ENCODE measurements at regions of chr10 and their contacts with region 1.

Region 1: DNA sequence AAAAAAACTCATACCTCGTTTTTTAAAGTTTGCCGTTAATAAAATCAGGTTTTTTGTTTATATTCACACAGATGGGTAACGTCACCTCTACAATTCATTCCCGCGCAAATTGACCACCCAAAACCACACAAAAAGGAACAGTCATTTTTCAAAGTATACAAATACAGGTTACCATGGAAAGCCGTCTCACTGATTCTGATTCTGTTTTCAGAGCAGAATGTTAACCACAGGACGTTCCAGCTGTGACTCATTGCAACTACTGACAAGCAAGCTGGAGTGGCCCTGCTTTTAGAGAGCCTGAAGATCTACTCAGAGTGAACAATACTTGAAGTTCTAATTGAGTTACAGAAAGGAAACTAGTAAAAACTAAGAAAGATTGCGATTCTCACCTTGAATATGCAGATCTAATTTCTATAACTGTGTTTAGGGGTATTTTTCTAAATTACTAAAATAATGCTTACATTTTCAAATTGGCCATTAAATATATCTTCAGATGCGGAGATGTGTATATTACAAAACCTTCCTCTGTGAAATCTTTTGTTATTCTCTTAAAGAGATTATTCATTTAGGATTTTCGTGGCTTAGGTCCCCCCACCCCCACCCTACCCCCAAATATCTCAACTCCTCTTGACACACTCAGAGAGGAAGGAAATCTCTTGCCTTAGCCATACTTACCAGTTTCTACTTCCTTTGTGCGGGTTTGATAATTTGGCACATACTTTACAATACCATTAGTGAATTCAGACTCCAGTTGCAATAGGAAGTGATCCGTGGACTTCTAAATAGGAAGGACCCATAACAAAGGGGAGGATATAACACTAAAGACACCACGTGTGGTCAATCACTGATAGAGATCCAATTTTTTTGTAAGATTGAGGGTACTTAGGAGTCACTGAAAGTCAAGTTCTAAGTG is 106.0 kb downstream of the CUBN start:
- DNase-seq: peak; percentile 78
- H3K4me3 Mint-ChIP-seq: peak overlapping the region; percentile 53
- H3K27ac Mint-ChIP-seq: peak overlapping the region; percentile 96
- H3K4me1 Mint-ChIP-seq: peaks cover 50% of the 10 kb centered on the region
- H3K27me3 Mint-ChIP-seq: peaks cover 22% of the 10 kb centered on the region

Region 2: DNA sequence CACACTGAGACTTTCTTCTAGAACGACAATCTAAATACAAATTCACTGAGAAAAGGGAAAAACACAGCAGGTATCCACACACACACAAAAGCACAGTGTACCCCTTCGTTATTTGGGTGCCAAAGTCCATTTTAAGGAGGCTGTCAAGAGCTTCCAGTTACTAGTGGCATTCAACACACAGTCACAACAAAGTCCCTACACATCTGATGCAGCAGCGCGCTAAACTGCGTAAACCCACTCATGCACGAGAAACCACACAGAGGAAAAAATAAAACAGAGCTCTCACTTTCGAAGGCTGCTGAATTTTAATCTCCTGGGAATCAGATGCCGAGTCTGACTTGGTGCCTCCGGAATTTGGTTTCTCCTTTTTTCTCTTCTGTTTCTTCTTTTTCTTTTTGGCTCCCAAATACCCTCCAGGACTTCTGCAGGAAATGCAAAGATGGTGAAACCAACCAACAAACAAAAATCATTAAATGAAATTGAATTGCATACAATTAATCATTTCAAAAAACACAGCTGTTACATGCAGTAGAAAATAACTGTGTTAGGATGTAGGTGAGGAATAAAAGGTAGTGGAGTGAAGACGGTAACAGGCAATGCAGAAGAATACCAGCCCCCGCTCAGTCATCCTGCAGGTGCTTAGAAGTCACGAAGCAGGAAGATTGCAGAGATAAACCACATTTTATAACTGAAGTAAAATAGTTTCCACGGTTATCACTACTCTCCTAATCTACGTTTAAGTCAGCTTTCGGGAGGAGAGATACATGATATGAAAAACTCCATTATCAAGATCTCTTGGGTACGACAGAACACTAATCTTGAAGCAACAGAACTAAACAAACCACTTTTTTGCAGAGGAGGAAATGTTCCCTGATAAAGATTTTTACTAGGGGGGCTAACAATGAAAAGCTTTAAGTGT is 1882.2 kb before region 1 on chr10:
- intact Hi-C with region 1: loop called (anchors 10 kb)
- DNase-seq: peak; percentile 36
- H3K4me3 Mint-ChIP-seq: peak overlapping the region; percentile 63
- H3K27ac Mint-ChIP-seq: peak overlapping the region; percentile 90
- H3K4me1 Mint-ChIP-seq: peaks cover 45% of the 10 kb centered on the region
- H3K27me3 Mint-ChIP-seq: no peaks in the 10 kb centered on the region

Region 3: GRCh38 chr10:16777473-16778370 is 245.9 kb before region 1 on chr10:
- intact Hi-C with region 1: loop called (anchors 5 kb)
- DNase-seq: no peak
- H3K4me3 Mint-ChIP-seq: no peak overlapping the region
- H3K27ac Mint-ChIP-seq: peak overlapping the region; percentile 59
- H3K4me1 Mint-ChIP-seq: peaks cover 22% of the 10 kb centered on the region
- H3K27me3 Mint-ChIP-seq: no peaks in the 10 kb centered on the region

Region 4: GRCh38 chr10:17001961-17002749 is 21.5 kb before region 1 on chr10:
- intact Hi-C with region 1: loop called (anchors 1 kb)
- DNase-seq: no peak
- H3K4me3 Mint-ChIP-seq: peak overlapping the region; percentile 46
- H3K27ac Mint-ChIP-seq: peak overlapping the region; percentile 99
- H3K4me1 Mint-ChIP-seq: peaks cover 33% of the 10 kb centered on the region
- H3K27me3 Mint-ChIP-seq: peaks cover 69% of the 10 kb centered on the region

Region 5: GRCh38 chr10:17038627-17039026 is 15.0 kb after region 1 on chr10:
- intact Hi-C with region 1: no loop called
- DNase-seq: no peak
- H3K4me3 Mint-ChIP-seq: no peak overlapping the region
- H3K27ac Mint-ChIP-seq: no peak overlapping the region
- H3K4me1 Mint-ChIP-seq: peaks cover 4% of the 10 kb centered on the region
- H3K27me3 Mint-ChIP-seq: peaks cover 16% of the 10 kb centered on the region

Region 6: DNA sequence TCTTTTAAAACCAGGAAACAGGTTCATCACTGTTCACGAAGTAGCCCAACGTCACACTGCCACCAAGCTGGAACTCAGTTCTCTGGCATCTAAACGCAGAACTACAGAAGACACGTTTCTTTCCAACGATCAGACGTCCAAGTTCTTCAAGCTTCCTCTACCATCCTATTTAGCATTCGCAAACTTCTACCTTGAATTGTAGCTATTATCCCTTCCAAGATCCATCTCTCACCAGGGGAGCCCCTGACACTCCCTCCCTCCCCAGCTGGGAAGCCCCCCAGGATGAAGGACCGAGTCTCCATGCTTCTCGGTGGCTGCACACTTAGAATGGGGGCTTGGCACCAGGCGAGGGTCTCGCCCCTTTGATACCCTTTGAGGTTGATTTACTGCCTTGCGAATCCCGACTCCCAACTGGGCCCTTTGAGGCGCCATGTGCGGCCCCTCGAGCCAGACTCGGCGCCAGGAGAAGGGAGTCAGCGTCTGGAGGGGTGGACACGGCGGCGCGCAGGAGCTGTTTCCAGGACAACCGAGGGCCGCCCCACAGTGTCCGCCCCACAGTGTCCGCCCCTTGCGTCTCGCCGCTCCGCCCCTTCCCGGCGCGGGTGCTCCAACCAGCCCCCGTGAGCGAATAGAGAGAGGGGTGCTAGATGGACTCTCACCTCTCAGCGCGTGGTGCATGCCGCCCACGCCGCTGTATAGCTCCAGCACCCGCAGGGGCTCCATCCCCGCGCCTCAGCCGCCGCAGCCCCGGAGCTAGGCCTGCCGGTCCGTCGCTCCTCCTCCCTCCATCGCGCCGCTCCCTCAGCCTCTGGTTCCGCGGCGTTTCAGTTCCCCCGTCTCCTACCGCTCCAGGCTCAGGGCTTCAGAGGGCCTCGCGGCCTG is 177.5 kb after region 1 on chr10 and contains the start of gene TRDMT1:
- intact Hi-C with region 1: loop called (anchors 1 kb)
- DNase-seq: peak; percentile 77
- H3K4me3 Mint-ChIP-seq: peak within 1 kb of the TSS; percentile 96
- H3K27ac Mint-ChIP-seq: peak within 1 kb of the TSS; percentile 77
- H3K4me1 Mint-ChIP-seq: peaks cover 49% of the 10 kb centered on the region
- H3K27me3 Mint-ChIP-seq: peaks cover 7% of the 10 kb centered on the region
- total RNA-seq, gene TRDMT1: 3.2 and 4.2 TPM in 2 replicates

Region 7: DNA sequence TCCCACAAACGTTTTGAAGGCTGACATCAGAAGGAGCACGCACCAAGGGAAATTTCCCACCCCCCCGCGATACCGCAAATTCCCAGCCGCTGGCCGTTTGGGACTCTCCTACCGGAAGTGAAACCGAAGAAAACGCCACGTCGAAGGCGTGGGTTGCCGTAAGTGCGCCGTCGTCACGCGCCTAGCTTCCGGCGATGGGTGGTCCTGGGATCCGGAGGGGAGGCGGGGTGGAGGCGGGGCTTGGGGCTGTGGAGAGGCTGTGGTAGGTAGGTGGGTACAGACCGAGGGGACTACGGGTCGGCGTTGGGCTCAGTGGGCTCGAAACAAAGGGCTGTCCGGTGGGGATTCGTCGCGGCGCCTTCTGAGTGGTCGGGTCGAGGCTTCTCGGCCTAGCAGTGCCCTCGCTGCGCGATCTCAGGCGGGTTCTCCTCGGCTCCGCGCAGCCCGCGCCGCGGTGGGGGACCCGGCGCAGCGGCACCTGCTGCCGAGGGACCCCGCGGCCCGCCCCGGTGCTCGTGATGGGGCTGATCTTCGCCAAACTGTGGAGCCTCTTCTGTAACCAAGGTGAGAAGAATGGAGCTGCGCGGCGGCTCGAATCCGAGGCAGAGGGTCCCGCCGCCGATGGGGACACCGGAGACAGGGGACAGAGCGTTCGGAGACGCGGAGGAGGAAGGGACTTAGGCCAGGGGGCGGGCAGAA is 1635.6 kb after region 1 on chr10 and contains the start of gene ARL5B:
- intact Hi-C with region 1: loop called (anchors 10 kb)
- DNase-seq: peak; percentile 92
- H3K4me3 Mint-ChIP-seq: peak within 1 kb of the TSS; percentile 94
- H3K27ac Mint-ChIP-seq: peak within 1 kb of the TSS; percentile 91
- H3K4me1 Mint-ChIP-seq: peaks cover 37% of the 10 kb centered on the region
- H3K27me3 Mint-ChIP-seq: no peaks in the 10 kb centered on the region
- total RNA-seq, gene ARL5B: 26.1 and 26.4 TPM in 2 replicates